Activated CD4-positive, alpha-beta T cell treated with anti-CD3 and anti-CD28 coated beads for 36 hours (primary cell): ENCODE measurements at regions of chr4 and their contacts with region 1.

Region 1: GRCh38 chr4:185395956-185396723 is 416 bp upstream of the LRP2BP start:
- DNase-seq: peak; percentile 98
- ATAC-seq: peak; percentile 85
- H3K4me3 Mint-ChIP-seq: peak overlapping the region; percentile 94
- H3K27ac Mint-ChIP-seq: peak overlapping the region; percentile 97
- H3K4me1 Mint-ChIP-seq: peaks cover 37% of the 10 kb centered on the region
- H3K27me3 Mint-ChIP-seq: no peaks in the 10 kb centered on the region

Region 2: GRCh38 chr4:183444214-183445066 is 1951.7 kb before region 1 on chr4 and contains the start of gene CDKN2AIP:
- CTCF ChIA-PET with region 1: no interaction called
- POLR2A ChIA-PET with region 1: no interaction called
- intact Hi-C with region 1: loop called in 1 of 2 experiments (anchors 10 kb)
- DNase-seq: peak; percentile 95
- ATAC-seq: peak; percentile 87
- H3K4me3 Mint-ChIP-seq: peak within 1 kb of the TSS; percentile 97
- H3K27ac Mint-ChIP-seq: peak within 1 kb of the TSS; percentile 97
- H3K4me1 Mint-ChIP-seq: peaks cover 42% of the 10 kb centered on the region
- H3K27me3 Mint-ChIP-seq: no peaks in the 10 kb centered on the region
- total RNA-seq, gene CDKN2AIP: 19.4 to 22.8 TPM

Region 3: DNA sequence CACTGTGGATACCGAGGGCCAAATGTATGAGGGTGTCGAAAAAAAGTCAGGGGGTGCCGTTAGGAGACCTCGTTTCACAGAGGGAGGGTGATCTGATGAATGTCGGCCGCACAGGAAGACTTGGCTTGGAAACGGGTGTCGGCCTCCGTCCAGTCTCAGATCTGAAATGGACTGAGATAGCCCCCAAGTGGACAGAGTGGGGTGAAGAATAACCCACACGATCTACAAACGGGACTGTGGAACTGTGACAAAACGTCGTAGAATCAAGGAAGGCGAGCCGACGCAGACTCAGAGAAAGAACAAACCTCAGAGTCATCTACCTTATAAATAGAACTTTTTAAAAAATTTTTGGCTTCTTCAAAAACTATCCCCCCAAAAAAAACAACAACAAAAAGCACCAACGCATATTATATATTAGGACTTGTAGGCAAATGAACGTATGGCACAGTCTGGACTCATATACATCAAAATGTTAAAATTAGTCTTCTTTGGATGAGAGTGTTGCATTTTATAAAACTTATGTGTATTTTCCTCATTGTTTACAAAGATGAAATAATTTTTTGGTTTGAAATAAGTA is 858.0 kb before region 1 on chr4:
- CTCF ChIA-PET with region 1: no interaction called
- POLR2A ChIA-PET with region 1: no interaction called
- intact Hi-C with region 1: loop called in 1 of 2 experiments (anchors 5 kb)
- DNase-seq: peak; percentile 69
- ATAC-seq: peak; percentile 43
- H3K4me3 Mint-ChIP-seq: peak overlapping the region; percentile 92
- H3K27ac Mint-ChIP-seq: peak overlapping the region; percentile 95
- H3K4me1 Mint-ChIP-seq: peaks cover 45% of the 10 kb centered on the region
- H3K27me3 Mint-ChIP-seq: no peaks in the 10 kb centered on the region

Region 4: DNA sequence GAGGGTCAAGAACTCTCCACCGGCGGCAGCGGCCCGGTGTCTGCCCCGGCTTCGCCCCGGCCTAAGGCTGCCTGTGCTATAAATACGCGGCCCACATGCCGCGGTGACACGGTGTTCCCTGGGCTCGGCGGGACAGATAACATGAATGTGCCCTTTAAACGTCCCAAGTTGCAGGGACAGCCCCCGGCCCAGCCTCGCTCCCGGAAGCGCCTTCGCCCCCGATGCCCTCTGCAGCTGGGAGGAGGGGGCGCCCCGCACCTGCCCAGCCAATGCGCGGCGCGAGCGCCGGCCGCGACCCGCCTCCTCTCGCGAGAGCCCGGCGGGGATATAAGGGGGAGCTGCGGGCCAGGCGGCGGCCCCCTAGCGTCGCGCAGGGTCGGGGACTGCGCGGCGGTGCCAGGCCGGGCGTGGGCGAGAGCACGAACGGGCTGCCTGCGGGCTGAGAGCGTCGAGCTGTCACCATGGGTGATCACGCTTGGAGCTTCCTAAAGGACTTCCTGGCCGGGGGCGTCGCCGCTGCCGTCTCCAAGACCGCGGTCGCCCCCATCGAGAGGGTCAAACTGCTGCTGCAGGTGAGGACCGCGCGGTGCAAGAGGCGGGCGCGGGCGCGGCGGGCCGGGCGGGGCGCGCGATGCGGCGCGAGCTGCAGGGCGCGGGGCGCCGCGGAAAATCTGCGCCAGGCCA is 253.1 kb before region 1 on chr4 and contains the start of gene SLC25A4:
- CTCF ChIA-PET with region 1: no interaction called
- POLR2A ChIA-PET with region 1: interaction called, 3 read pairs
- intact Hi-C with region 1: loop called (anchors 1 kb)
- DNase-seq: peak; percentile 91
- ATAC-seq: peak; percentile 95
- H3K4me3 Mint-ChIP-seq: peak within 1 kb of the TSS; percentile 74
- H3K27ac Mint-ChIP-seq: peak within 1 kb of the TSS; percentile 70
- H3K4me1 Mint-ChIP-seq: peaks cover 10% of the 10 kb centered on the region
- H3K27me3 Mint-ChIP-seq: peaks cover 33% of the 10 kb centered on the region
- total RNA-seq, gene SLC25A4: 4.2 to 5.0 TPM

Region 5: DNA sequence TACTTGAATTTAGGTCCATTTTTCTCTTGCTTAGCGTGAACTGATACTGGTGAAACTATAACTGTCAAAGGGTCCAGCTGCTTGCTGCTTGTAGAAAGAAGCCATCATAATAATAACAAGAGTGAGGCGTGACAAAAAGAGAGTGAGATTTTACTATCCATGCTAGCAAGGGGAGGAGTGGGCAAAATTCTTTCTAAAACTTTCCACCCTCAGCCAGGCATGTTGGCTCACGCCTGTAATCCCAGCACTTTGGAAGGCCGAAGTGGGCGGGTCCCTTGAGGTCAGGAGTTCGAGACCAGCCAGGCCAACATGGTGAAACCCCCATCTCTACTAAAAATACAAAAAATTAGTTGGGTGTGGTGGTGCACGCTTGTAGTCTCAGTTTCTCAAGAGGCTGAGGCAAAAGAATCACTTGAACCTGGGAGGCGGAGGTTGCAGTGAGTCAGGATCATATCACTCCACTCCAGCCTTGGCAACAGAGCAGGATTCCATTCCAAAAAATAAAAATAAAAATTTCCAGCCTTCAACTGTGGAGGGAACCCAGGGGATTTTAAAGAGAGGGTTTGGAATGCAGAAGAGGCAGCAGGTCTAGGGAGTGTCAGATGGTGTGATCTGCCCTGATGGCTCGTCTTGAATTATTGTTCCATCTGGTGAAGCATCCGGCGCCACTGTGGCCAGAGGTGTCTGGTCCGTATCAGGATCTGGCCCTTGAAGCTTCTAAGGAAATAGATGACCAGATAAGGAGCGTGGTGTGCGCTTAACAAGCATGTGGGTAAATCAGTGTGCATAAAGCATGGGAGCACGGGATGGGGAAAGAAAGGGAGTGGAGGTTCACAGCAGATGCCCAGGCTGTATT is 52.2 kb before region 1 on chr4:
- CTCF ChIA-PET with region 1: no interaction called
- POLR2A ChIA-PET with region 1: no interaction called
- intact Hi-C with region 1: loop called in 1 of 2 experiments (anchors 2 kb)
- DNase-seq: peak; percentile 20
- ATAC-seq: no peak
- H3K4me3 Mint-ChIP-seq: no peak overlapping the region
- H3K27ac Mint-ChIP-seq: peak overlapping the region; percentile 65
- H3K4me1 Mint-ChIP-seq: peaks cover 48% of the 10 kb centered on the region
- H3K27me3 Mint-ChIP-seq: no peaks in the 10 kb centered on the region

Region 6: GRCh38 chr4:185587427-185588161 is 191.5 kb after region 1 on chr4:
- CTCF ChIA-PET with region 1: no interaction called
- POLR2A ChIA-PET with region 1: no interaction called
- intact Hi-C with region 1: loop called in 1 of 2 experiments (anchors 2 kb)
- DNase-seq: peak; percentile 90
- ATAC-seq: peak; percentile 99
- H3K4me3 Mint-ChIP-seq: peak overlapping the region; percentile 40
- H3K27ac Mint-ChIP-seq: peak overlapping the region; percentile 63
- H3K4me1 Mint-ChIP-seq: peaks cover 18% of the 10 kb centered on the region
- H3K27me3 Mint-ChIP-seq: peaks cover 47% of the 10 kb centered on the region